IMR-90 (cell line): ENCODE measurements at regions of chr3 and their contacts with region 1.

Region 1: GRCh38 chr3:15339786-15340215 is 7.4 kb upstream of the SH3BP5 start:
- DNase-seq: peak; percentile 75
- ATAC-seq: peak; percentile 88
- H3K4me3 ChIP-seq: no peak overlapping the region
- H3K27ac ChIP-seq: no peak overlapping the region
- H3K4me1 ChIP-seq: no peaks in the 10 kb centered on the region
- H3K27me3 ChIP-seq: peaks cover 14% of the 10 kb centered on the region
- CTCF ChIP-seq: no peak
- POLR2A ChIP-seq: no peak
- RAD21 ChIP-seq: no peak

Region 2: GRCh38 chr3:15116032-15116669 is 223.7 kb before region 1 on chr3:
- CTCF ChIA-PET with region 1: no interaction called
- POLR2A ChIA-PET with region 1: no interaction called
- dilution Hi-C with region 1: no loop called
- in situ Hi-C with region 1: no loop called
- intact Hi-C with region 1: loop called (anchors 5 kb)
- DNase-seq: no peak
- ATAC-seq: no peak
- H3K4me3 ChIP-seq: no peak overlapping the region
- H3K27ac ChIP-seq: no peak overlapping the region
- H3K4me1 ChIP-seq: no peaks in the 10 kb centered on the region
- H3K27me3 ChIP-seq: peaks cover 28% of the 10 kb centered on the region
- CTCF ChIP-seq: no peak
- POLR2A ChIP-seq: no peak
- RAD21 ChIP-seq: no peak